ENCODE measurements at regions of chr20 and their contacts with region 1.

Region 1: GRCh38 chr20:51385646-51386530 is 156.6 kb downstream of the NFATC2 start:
- DNase-seq: peak; percentile 29 to 63 (median 37)
- H3K4me3 ChIP-seq: no peak overlapping the region
- H3K4me3 Mint-ChIP-seq: peak overlapping the region in 4 of 8 donors; percentile 13 to 50 (median 38)
- H3K27ac ChIP-seq: peak overlapping the region; percentile 13
- H3K27ac Mint-ChIP-seq: peak overlapping the region; percentile 35 to 85 (median 77)
- H3K4me1 ChIP-seq: peaks cover 47% of the 10 kb centered on the region
- H3K4me1 Mint-ChIP-seq: peaks cover 24 to 50% (median 36%) of the 10 kb centered on the region in 4 donors
- H3K27me3 ChIP-seq: no peaks in the 10 kb centered on the region
- H3K27me3 Mint-ChIP-seq: no peaks in the 10 kb centered on the region

Region 2: GRCh38 chr20:51404298-51405060 is 18.6 kb after region 1 on chr20:
- CTCF ChIA-PET with region 1: interaction called, 38 read pairs
- POLR2A ChIA-PET with region 1: interaction called, 43 read pairs
- intact Hi-C with region 1: loop called (anchors 1 kb)
- DNase-seq: peak; percentile 86 to 98 (median 90)
- H3K4me3 ChIP-seq: no peak overlapping the region
- H3K4me3 Mint-ChIP-seq: peak overlapping the region in 7 of 8 donors; percentile 43 to 94 (median 78)
- H3K27ac ChIP-seq: peak overlapping the region; percentile 96
- H3K27ac Mint-ChIP-seq: peak overlapping the region; percentile 99 to 100 (median 100)
- H3K4me1 ChIP-seq: peaks cover 97% of the 10 kb centered on the region
- H3K4me1 Mint-ChIP-seq: peaks cover 64 to 92% (median 77%) of the 10 kb centered on the region in 4 donors
- H3K27me3 ChIP-seq: no peaks in the 10 kb centered on the region
- H3K27me3 Mint-ChIP-seq: no peaks in the 10 kb centered on the region

Region 3: DNA sequence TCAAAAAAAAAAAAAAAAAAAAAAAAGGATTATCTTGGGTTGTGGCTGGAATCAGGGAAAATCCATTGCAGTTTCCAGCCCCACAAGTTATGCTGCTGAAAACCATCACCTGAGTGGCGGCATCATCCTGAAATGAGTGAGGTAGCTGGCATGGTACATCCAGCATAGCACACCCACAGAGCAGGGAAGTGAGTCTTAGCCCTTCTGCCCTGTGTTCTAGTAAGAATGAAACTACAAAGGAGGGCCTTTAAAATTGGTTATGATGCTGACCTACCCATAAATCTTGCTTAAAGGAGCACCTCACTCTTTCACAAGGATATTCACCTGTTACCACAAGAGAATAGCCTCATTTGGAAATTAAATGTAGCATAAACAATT is 37.4 kb after region 1 on chr20:
- CTCF ChIA-PET with region 1: interaction called, 54 read pairs
- POLR2A ChIA-PET with region 1: interaction called, 14 read pairs
- intact Hi-C with region 1: loop called (anchors 5 kb)
- DNase-seq: peak in 1 of 5 donors; percentile 30
- H3K4me3 ChIP-seq: no peak overlapping the region
- H3K4me3 Mint-ChIP-seq: peak overlapping the region in 7 of 8 donors; percentile 12 to 84 (median 79)
- H3K27ac ChIP-seq: peak overlapping the region; percentile 71
- H3K27ac Mint-ChIP-seq: peak overlapping the region; percentile 87 to 95 (median 94)
- H3K4me1 ChIP-seq: peaks cover 87% of the 10 kb centered on the region
- H3K4me1 Mint-ChIP-seq: peaks cover 60 to 95% (median 71%) of the 10 kb centered on the region in 4 donors
- H3K27me3 ChIP-seq: no peaks in the 10 kb centered on the region
- H3K27me3 Mint-ChIP-seq: no peaks in the 10 kb centered on the region

Region 4: GRCh38 chr20:51500311-51500710 is 114.4 kb after region 1 on chr20:
- CTCF ChIA-PET with region 1: interaction called, 16 read pairs
- POLR2A ChIA-PET with region 1: interaction called, 3 read pairs
- intact Hi-C with region 1: no loop called
- DNase-seq: peak; percentile 55 to 85 (median 64)
- H3K4me3 ChIP-seq: no peak overlapping the region
- H3K4me3 Mint-ChIP-seq: peak overlapping the region in 5 of 8 donors; percentile 14 to 88 (median 62)
- H3K27ac ChIP-seq: peak overlapping the region; percentile 16
- H3K27ac Mint-ChIP-seq: peak overlapping the region; percentile 90 to 99 (median 97)
- H3K4me1 ChIP-seq: peaks cover 80% of the 10 kb centered on the region
- H3K4me1 Mint-ChIP-seq: peaks cover 70 to 88% (median 79%) of the 10 kb centered on the region in 4 donors
- H3K27me3 ChIP-seq: no peaks in the 10 kb centered on the region
- H3K27me3 Mint-ChIP-seq: no peaks in the 10 kb centered on the region

Region 5: GRCh38 chr20:51562332-51563155 is 176.7 kb after region 1 on chr20:
- CTCF ChIA-PET with region 1: interaction called, 18 read pairs
- POLR2A ChIA-PET with region 1: interaction called, 6 read pairs
- intact Hi-C with region 1: loop called (anchors 1 kb)
- DNase-seq: peak in 3 of 5 donors; percentile 6 to 34 (median 21)
- H3K4me3 ChIP-seq: peak overlapping the region; percentile 15 to 44
- H3K4me3 Mint-ChIP-seq: peak overlapping the region; percentile 69 to 83 (median 73)
- H3K27ac ChIP-seq: no peak overlapping the region
- H3K27ac Mint-ChIP-seq: no peak overlapping the region
- H3K4me1 ChIP-seq: peaks cover 28% of the 10 kb centered on the region
- H3K4me1 Mint-ChIP-seq: peaks cover 8 to 45% (median 14%) of the 10 kb centered on the region in 4 donors
- H3K27me3 ChIP-seq: peaks cover 45% of the 10 kb centered on the region
- H3K27me3 Mint-ChIP-seq: peaks cover 33 to 36% of the 10 kb centered on the region in 2 donors

Region 6: DNA sequence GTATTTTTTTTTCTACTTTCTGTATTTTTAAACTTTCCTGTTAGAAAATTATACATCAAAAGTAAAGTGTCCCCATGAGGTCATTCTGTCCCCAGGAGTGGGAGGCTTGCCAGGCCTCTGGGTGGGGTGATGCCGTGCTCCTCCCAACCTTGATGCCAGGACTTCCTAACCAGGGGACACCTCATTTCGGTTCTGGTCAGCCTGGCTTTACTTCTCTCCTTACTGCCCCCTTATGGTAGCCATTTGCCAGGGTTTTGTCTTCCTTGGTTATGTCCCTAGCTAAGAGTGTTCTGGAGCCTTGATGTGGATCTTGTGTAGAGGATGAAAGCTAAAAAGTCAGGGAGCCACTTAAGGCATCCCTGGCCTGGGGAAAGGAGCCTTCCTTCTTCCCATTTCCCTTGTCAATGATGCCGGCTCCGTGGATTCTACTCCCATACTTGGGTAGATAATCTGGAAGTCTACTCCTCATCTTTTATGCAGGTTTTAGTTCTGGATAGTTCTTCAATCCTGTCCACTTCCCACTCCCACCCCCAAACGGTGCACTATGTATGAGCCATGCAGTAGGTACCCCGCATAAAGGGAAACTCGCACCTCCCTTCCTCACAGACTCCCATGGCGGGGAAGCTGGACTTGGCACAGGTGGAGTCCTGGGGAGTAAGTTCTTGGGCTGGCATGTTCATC is 580.5 kb after region 1 on chr20:
- CTCF ChIA-PET with region 1: no interaction called
- POLR2A ChIA-PET with region 1: no interaction called
- intact Hi-C with region 1: no loop called
- DNase-seq: no peak
- H3K4me3 ChIP-seq: no peak overlapping the region
- H3K4me3 Mint-ChIP-seq: no peak overlapping the region
- H3K27ac ChIP-seq: no peak overlapping the region
- H3K27ac Mint-ChIP-seq: no peak overlapping the region
- H3K4me1 ChIP-seq: no peaks in the 10 kb centered on the region
- H3K4me1 Mint-ChIP-seq: peaks cover 0 to 3% (median 0%) of the 10 kb centered on the region in 4 donors
- H3K27me3 ChIP-seq: no peaks in the 10 kb centered on the region
- H3K27me3 Mint-ChIP-seq: peaks cover 4 to 5% of the 10 kb centered on the region in 2 donors

Measured in CD4-positive, alpha-beta memory T cell (primary cell).